HEK293T (cell line): ENCODE measurements at regions of chr6 and their contacts with region 1.

Region 1: GRCh38 chr6:27630727-27631608 is 158.1 kb upstream of the ZNF184 start:
- DNase-seq: peak; percentile 77

Region 2: GRCh38 chr6:27593861-27594260 is 37.1 kb before region 1 on chr6:
- CTCF ChIA-PET with region 1: no interaction called
- POLR2A ChIA-PET with region 1: no interaction called
- DNase-seq: no peak

Region 3: GRCh38 chr6:27617700-27618689 is 13.0 kb before region 1 on chr6:
- CTCF ChIA-PET with region 1: interaction called, 9 read pairs
- POLR2A ChIA-PET with region 1: interaction called, 15 read pairs
- DNase-seq: peak; percentile 54

Region 4: GRCh38 chr6:27650620-27651370 is 19.8 kb after region 1 on chr6:
- CTCF ChIA-PET with region 1: no interaction called
- POLR2A ChIA-PET with region 1: no interaction called
- DNase-seq: peak; percentile 70